H1 (cell line): ENCODE measurements at regions of chr1 and their contacts with region 1.

Region 1: DNA sequence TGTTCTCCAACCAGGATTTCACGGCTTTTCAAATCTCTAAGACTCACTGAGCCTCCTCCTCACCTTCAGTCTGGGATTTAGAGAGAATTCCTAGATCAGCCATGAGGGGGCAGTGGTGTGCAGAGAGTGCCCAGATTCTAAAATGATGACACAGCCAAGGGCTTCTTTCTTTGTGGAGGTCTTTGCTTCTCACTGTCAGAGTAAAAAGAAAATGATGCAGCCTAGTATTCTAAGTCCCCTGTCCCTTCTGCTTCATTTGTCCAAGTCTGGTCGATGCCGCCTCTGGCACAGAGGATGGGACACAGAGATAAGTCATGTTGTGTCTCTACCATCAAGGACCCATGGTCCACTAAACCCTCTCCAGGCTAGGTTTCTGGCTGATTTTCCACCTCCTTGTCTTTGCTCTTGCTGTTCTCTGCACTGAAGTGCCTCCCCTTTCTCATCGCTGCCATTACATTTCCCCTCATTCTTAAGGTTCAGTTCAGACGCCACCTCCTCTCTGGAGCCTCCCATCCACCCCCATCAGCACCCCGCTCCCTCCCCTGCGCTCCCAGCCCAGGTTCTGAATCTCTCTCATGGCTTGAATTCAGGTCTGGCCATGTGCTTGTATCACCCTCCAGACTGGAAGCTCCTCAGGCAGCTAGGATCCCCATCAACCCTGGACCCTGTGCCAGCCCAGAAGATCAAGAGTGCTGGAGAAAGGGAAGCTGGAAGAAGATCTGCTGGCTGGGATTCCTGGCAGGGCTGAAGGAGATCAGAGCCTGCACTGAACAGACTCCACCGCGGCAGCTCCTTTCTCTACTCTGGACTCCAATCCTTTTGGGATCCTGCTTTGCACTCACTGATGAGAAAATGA is 12.0 kb upstream of the TINAGL1 start:
- DNase-seq: peak in 1 of 2 experiments; percentile 94
- H3K4me3 ChIP-seq: no peak overlapping the region
- H3K27ac ChIP-seq: no peak overlapping the region
- H3K4me1 ChIP-seq: peaks cover 0 to 9% (median 6%) of the 10 kb centered on the region in 4 experiments; a peak in 5 of 7 replicates
- H3K27me3 ChIP-seq: no peaks in the 10 kb centered on the region
- CTCF ChIP-seq: peak; percentile 23 to 83 (median 80)
- EP300 ChIP-seq: no peak
- POLR2A ChIP-seq: no peak
- RAD21 ChIP-seq: peak; percentile 89 to 91

Region 2: DNA sequence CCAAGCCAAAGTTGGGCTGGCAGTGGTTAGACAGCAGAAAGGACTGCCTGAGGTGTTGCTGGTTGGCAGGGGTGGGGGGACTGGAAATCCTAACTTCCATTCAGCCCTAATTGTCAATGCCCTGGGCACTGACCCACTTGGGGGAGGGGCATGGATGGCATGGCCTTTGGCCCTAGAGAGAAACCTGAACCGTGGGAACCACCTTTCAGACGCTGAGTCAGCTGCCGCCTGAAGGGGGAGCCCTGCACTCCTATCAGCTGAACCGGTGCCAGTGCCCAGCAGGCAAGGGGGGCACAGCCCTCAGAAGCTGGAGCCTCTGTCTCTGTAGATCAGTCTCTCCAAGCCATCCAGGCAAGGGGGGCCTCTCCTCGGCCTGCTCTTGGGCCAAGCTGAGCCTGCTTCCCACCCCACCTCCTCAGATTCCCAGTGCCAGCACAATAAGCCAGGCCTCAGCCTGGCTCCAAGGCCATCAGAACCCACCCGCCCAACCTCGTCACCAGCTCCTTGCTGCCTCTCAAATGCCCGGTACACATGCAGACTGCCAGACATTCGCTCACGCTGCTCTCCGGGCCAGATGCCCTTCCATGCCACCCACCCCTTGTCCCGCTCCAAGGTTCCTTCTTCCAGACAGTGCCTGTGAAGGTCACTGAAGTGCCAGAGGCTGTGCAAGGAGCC is 23.5 kb after region 1 on chr1:
- CTCF ChIA-PET with region 1: interaction called, 62 read pairs
- POLR2A ChIA-PET with region 1: interaction called, 7 read pairs
- DNase-seq: peak in 1 of 2 experiments; percentile 91
- H3K4me3 ChIP-seq: peak overlapping the region in 1 of 4 experiments; percentile 62; a peak in 1 of 8 replicates
- H3K27ac ChIP-seq: no peak overlapping the region
- H3K4me1 ChIP-seq: peaks cover 2 to 12% (median 10%) of the 10 kb centered on the region in 4 experiments
- H3K27me3 ChIP-seq: peaks cover 0 to 12% (median 5%) of the 10 kb centered on the region in 4 experiments; a peak in 4 of 7 replicates
- CTCF ChIP-seq: peak; percentile 72 to 94 (median 94)
- EP300 ChIP-seq: no peak
- POLR2A ChIP-seq: peak in 1 of 2 experiments; percentile 42; a peak in 1 of 3 replicates
- RAD21 ChIP-seq: peak; percentile 43 to 59

Region 3: DNA sequence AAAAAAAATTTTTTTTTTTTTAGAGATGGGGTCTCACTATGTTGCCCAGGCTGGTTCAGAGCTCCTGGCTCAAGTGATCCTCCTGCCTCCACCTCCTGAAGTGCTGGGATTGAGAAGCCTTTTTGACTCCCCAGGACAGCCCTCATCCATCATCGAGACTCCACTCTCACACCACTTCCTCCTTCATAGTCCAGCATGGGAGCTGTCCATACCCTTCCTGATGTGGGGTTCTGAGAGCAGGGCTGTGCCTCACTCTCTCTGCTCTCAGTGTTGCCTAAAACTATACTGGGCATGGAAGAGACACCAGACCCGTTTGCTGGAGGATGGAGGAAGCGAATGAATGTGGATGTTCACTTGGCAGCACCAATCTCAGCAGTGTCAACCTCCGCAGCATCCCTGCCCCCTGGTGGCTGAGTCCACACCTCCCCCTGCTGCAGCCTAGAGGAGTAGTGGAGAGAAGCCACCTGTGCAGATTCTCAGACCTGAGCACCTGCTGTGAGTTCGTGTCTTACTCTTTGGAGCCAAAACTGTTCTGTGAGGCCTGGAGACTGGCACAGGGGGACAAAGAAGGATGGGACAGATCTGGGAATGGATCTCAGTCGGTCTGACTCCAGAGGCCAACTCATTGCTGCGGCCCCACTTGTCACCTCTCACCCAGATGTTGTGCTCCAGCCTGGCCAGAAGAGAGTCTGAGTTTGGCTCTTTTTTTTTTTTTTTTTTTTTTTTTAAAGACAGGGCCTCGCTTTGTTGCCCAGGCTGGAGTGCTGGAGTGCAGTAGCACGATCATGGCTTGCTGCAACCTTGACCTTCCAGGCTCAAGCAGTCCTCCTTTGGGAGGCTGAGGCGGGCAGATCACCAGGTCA is 29.6 kb after region 1 on chr1:
- CTCF ChIA-PET with region 1: interaction called, 62 read pairs
- POLR2A ChIA-PET with region 1: interaction called, 7 read pairs
- DNase-seq: peak; percentile 62 to 96
- H3K4me3 ChIP-seq: no peak overlapping the region
- H3K27ac ChIP-seq: no peak overlapping the region
- H3K4me1 ChIP-seq: peaks cover 0 to under 1% (median 0%) of the 10 kb centered on the region in 4 experiments; a peak in 2 of 7 replicates
- H3K27me3 ChIP-seq: peaks cover 0 to 1% (median under 1%) of the 10 kb centered on the region in 4 experiments; a peak in 1 of 7 replicates
- CTCF ChIP-seq: peak; percentile 96 to 100 (median 99)
- EP300 ChIP-seq: no peak
- POLR2A ChIP-seq: no peak
- RAD21 ChIP-seq: peak; percentile 87 to 91

Region 4: GRCh38 chr1:31633053-31633452 is 68.7 kb after region 1 on chr1:
- CTCF ChIA-PET with region 1: interaction called, 12 read pairs
- POLR2A ChIA-PET with region 1: no interaction called
- DNase-seq: peak in 1 of 2 experiments; percentile 85
- H3K4me3 ChIP-seq: no peak overlapping the region
- H3K27ac ChIP-seq: no peak overlapping the region
- H3K4me1 ChIP-seq: no peaks in the 10 kb centered on the region
- H3K27me3 ChIP-seq: no peaks in the 10 kb centered on the region
- CTCF ChIP-seq: peak; percentile 71 to 88 (median 84)
- EP300 ChIP-seq: no peak
- POLR2A ChIP-seq: no peak
- RAD21 ChIP-seq: peak; percentile 51 to 61